A673 (cell line): ENCODE measurements at regions of chr12 and their contacts with region 1.

Region 1: DNA sequence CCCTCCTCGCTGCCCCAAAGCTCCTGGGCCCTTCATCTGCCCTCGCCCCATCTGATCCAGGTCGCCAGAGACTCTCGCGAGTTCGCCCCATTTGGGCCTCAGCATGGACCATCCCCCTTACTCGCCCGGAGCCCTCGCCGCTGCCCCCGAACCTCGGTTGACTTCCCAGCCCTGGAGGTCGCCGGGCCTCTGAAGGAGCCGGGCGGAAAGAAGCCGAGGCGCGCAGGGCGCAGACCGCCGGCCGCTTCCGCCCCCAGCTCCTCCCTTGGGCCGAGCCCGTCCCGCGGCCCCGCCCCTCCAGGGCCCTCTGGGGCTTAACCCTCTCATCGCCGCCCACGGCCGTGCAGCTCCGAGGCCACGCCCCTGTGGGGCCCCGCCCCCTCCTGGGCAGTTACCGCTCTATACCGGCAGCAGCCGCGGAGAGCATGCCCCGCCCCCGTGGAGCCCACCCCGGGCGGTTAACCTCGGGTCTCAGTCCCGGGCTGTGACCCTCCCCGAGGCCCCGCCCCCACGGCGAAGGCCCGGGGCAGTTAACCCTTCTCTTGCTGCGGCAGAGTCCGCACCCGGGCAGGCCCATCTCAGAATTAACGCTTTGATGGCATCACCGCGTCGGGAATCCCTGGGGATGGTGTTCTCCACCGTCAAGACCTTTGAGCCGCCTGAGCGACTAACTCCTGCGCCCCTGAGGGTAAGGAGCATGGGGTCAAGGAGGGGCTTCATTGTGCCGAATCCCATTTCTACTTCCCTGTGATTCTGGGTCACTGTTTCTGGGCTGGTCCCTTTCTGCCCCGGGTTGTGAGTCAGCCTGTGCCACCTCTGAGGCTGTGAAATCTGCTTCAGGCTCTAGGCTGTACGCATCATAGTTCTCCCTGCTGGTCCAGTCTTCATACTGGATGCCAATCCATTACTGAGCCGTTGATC is at the start of gene SPSB2:
- DNase-seq: peak; percentile 98
- H3K4me3 ChIP-seq: peak within 1 kb of the TSS; percentile 75
- H3K27ac ChIP-seq: peak within 1 kb of the TSS; percentile 74
- H3K4me1 ChIP-seq: peaks cover 22% of the 10 kb centered on the region
- H3K27me3 ChIP-seq: no peaks in the 10 kb centered on the region
- CTCF ChIP-seq: no peak
- total RNA-seq, gene SPSB2: 8.1 and 10.8 TPM in 2 replicates

Region 2: GRCh38 chr12:6461401-6462233 is 411.7 kb before region 1 on chr12:
- CTCF ChIA-PET with region 1: no interaction called
- POLR2A ChIA-PET with region 1: no interaction called
- intact Hi-C with region 1: no loop called
- DNase-seq: no peak
- H3K4me3 ChIP-seq: no peak overlapping the region
- H3K27ac ChIP-seq: no peak overlapping the region
- H3K4me1 ChIP-seq: no peaks in the 10 kb centered on the region
- H3K27me3 ChIP-seq: no peaks in the 10 kb centered on the region
- CTCF ChIP-seq: no peak

Region 3: GRCh38 chr12:6662906-6663742 is 210.2 kb before region 1 on chr12 and contains the start of gene ING4:
- CTCF ChIA-PET with region 1: no interaction called
- POLR2A ChIA-PET with region 1: interaction called, 10 read pairs
- intact Hi-C with region 1: no loop called
- DNase-seq: peak; percentile 100
- H3K4me3 ChIP-seq: peak within 1 kb of the TSS; percentile 88
- H3K27ac ChIP-seq: peak within 1 kb of the TSS; percentile 94
- H3K4me1 ChIP-seq: peaks cover 11% of the 10 kb centered on the region
- H3K27me3 ChIP-seq: no peaks in the 10 kb centered on the region
- CTCF ChIP-seq: no peak
- total RNA-seq, gene ING4: 21.4 and 25.5 TPM in 2 replicates

Region 4: GRCh38 chr12:6884539-6884938 is 11.2 kb after region 1 on chr12:
- CTCF ChIA-PET with region 1: interaction called, 10 read pairs
- POLR2A ChIA-PET with region 1: no interaction called
- intact Hi-C with region 1: no loop called
- DNase-seq: no peak
- H3K4me3 ChIP-seq: no peak overlapping the region
- H3K27ac ChIP-seq: no peak overlapping the region
- H3K4me1 ChIP-seq: no peaks in the 10 kb centered on the region
- H3K27me3 ChIP-seq: no peaks in the 10 kb centered on the region
- CTCF ChIP-seq: no peak

Region 5: DNA sequence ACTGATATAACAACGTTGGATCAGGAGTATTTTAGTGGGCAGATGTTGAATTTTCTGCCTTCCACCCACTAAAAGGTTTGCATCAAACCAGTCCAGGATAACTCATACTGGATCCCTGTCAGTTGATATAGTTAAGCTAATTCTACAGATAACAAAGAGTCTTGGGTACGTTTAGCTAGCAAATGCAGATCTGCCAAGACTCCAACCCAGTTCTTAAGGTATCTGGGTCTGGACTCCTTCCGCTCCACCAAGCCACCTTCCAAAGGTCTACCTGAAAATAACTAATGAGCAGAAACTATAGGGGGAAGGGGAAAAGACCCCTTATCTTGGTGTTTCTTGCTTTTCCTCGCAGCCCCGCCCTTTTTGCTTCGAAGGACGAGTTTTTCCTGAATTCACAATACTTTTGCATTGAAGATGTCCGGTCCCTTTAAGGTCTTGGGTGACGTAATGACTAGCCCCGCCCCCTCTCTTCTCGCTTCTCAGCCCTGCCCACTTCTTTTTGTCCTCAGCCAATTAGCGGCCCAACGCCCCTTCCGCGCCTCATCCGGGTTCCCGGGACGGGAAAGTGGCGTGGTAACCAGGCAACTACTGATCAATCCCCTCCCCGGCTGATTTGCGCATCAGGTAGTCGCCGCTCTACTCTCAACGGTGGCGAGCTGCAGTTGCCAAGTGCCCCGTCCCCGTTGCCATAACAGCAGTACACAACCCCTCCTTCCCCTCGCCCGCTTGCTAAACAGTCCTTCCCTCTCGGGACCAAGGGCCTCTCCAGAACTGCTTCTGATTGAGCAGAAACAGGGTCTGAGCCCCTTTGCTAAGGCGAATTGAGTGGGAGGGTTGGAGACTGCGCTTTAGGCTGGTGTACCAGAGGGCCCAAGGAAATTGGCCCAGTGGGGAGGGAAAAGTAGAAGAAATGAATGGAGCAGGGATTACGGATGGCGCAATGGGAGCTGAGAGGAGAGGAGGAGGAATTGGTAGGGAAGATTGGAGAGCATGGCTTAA is 31.2 kb after region 1 on chr12 and contains the start of gene LRRC23:
- CTCF ChIA-PET with region 1: no interaction called
- POLR2A ChIA-PET with region 1: interaction called, 3 read pairs
- intact Hi-C with region 1: loop called (anchors 2 kb)
- DNase-seq: peak; percentile 98
- H3K4me3 ChIP-seq: peak within 1 kb of the TSS; percentile 56
- H3K27ac ChIP-seq: peak within 1 kb of the TSS; percentile 63
- H3K4me1 ChIP-seq: peaks cover 7% of the 10 kb centered on the region
- H3K27me3 ChIP-seq: no peaks in the 10 kb centered on the region
- CTCF ChIP-seq: no peak
- total RNA-seq, gene LRRC23: 7.7 and 13.6 TPM in 2 replicates

Region 6: DNA sequence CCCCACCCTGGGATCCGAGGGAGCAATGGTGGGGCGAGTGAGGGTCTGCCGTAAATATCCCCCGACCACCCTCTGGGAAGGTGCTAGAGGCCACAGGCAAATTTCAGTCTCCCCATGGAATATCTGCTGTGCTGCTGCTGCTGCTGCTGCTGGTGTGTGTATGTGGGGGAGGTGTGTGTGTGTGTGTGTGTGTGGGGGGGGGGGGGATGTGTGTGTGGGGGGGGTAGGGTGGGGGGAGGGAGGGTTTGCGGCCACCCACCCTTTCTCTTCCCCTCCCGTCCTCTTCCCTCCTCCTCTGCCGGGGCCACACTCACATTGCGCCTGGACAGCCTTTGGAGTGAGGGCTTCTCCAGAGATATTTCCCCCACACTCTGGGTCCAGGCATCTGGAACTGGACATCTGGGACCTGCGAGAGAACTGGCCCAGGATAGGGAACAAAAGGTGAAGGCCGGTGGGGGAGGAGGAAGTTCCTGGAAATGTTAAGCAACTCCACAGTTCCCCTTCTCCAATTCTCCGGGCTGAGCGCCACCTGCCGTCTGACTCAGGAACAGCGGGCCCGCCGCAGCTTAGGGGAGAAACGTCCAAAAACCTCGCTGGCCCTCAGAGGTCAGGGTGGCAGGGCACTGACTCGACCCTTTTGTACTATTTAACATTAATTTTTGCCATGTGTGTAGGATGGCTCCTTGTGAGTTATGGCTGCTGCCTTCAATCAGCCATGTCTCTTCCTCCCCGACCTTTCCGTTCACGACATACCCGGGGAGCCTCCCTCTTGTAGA is 235.6 kb after region 1 on chr12 and contains the start of gene C1RL:
- CTCF ChIA-PET with region 1: interaction called, 11 read pairs
- POLR2A ChIA-PET with region 1: interaction called, 3 read pairs
- intact Hi-C with region 1: loop called (anchors 5 kb)
- DNase-seq: peak; percentile 82
- H3K4me3 ChIP-seq: peak within 1 kb of the TSS; percentile 42
- H3K27ac ChIP-seq: peak within 1 kb of the TSS; percentile 52
- H3K4me1 ChIP-seq: no peaks in the 10 kb centered on the region
- H3K27me3 ChIP-seq: no peaks in the 10 kb centered on the region
- CTCF ChIP-seq: peak; percentile 96
- total RNA-seq, gene C1RL: 2.4 and 4.0 TPM in 2 replicates